Dorsolateral prefrontal cortex (tissue), 120 donors: ENCODE measurements at regions of chr17 and their contacts with region 1.

Region 1: GRCh38 chr17:7314719-7315569 is at the start of gene GPS2:
- DNase-seq: peak; percentile 90 to 97 (median 93)
- H3K4me3 ChIP-seq: peak within 1 kb of the TSS; percentile 47 to 97 (median 89)
- H3K27ac ChIP-seq: peak within 1 kb of the TSS; percentile 32 to 99 (median 94)
- H3K27me3 ChIP-seq: no peaks in the 10 kb centered on the region
- CTCF ChIP-seq: peak in 21 of 56 donors; percentile 4 to 42 (median 18)
- total RNA-seq, gene GPS2: 46.2 to 97.3 (median 64.4) TPM

Region 2: DNA sequence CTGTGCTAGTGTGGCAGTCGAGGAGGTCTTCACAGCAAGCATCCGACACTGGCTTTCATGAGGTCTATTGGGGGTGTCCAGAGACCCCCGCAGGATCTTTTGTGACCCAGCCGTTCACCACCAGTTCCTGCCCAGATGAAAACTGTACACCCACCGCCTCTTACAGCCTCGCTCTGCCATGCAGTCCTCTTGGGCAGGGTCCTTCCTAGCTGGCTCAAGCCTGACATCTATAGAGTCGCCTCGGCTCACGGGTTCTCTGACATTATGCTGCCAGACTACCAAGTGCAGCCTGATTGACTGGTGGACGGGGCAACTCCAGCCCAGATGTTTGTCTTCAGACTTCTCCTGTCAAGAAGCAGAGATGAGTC is 220.3 kb before region 1 on chr17:
- intact Hi-C with region 1: no loop called
- DNase-seq: no peak
- H3K4me3 ChIP-seq: no peak overlapping the region
- H3K27ac ChIP-seq: no peak overlapping the region
- H3K27me3 ChIP-seq: peaks cover 0 to 4% (median 0%) of the 10 kb centered on the region in 45 donors
- CTCF ChIP-seq: no peak

Region 3: DNA sequence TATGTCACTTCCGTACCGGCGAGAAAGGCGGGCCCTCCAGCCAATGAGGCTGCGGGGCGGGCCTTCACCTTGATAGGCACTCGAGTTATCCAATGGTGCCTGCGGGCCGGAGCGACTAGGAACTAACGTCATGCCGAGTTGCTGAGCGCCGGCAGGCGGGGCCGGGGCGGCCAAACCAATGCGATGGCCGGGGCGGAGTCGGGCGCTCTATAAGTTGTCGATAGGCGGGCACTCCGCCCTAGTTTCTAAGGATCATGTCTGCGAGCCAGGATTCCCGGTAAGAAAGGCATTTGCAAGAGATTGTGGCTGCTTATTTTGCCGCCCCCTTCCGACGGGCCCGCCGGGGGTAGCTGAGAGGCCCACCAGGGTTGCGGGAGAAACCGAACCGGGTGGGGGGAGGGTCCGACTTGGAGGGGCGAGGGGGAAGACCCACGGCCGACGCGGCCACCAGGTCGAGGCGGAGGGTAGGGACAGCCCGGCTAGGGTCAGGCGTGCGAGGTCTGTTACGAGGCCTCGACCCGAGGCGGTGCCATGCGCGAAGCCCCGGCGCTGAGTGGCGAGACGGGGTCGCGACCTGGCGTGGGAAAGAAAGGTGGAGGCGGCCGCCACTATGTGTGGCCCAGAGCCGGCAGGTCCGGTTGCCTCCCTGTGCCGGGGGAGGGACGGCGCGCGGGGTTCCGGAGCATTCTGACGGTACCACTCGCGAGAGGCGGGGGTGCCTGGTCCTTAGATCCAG is 257.8 kb after region 1 on chr17:
- intact Hi-C with region 1: loop called in 1 of 2 experiments (anchors 5 kb)
- DNase-seq: peak in 9 of 10 donors; percentile 99 to 100 (median 100)
- H3K4me3 ChIP-seq: peak overlapping the region; percentile 64 to 100 (median 99)
- H3K27ac ChIP-seq: peak overlapping the region; percentile 86 to 100 (median 98)
- H3K27me3 ChIP-seq: no peaks in the 10 kb centered on the region
- CTCF ChIP-seq: peak in 17 of 56 donors; percentile 4 to 42 (median 16)